ENCODE measurements at regions of chr5 and their contacts with region 1.

Region 1: GRCh38 chr5:127011961-127012644 is 18.3 kb downstream of the MARCHF3 start:
- DNase-seq: peak; percentile 66
- ATAC-seq: peak; percentile 85
- H3K4me3 ChIP-seq: no peak overlapping the region
- H3K27ac ChIP-seq: peak overlapping the region; percentile 65
- H3K4me1 ChIP-seq: peaks cover 25% of the 10 kb centered on the region
- H3K27me3 ChIP-seq: no peaks in the 10 kb centered on the region
- CTCF ChIP-seq: no peak
- EP300 ChIP-seq: peak; percentile 73 to 87; a peak in 2 of 4 replicates
- POLR2A ChIP-seq: 0 out of 2 replicates have a peak, but pooled peaks have one; percentile 20
- RAD21 ChIP-seq: no peak

Region 2: GRCh38 chr5:126443374-126443851 is 568.7 kb before region 1 on chr5:
- CTCF ChIA-PET with region 1: no interaction called
- POLR2A ChIA-PET with region 1: no interaction called
- RAD21 ChIA-PET with region 1: no interaction called
- SMC1A ChIA-PET with region 1: no interaction called
- in situ Hi-C with region 1: no loop called
- intact Hi-C with region 1: loop called (anchors 5 kb)
- DNase-seq: peak; percentile 75
- ATAC-seq: peak; percentile 85
- H3K4me3 ChIP-seq: no peak overlapping the region; the same call in 1 of the 2 replicates
- H3K27ac ChIP-seq: peak overlapping the region; percentile 56; the same call in 1 of the 2 replicates
- H3K4me1 ChIP-seq: peaks cover 36% of the 10 kb centered on the region
- H3K27me3 ChIP-seq: no peaks in the 10 kb centered on the region
- CTCF ChIP-seq: no peak
- EP300 ChIP-seq: peak; percentile 79 to 86; a peak in 3 of 4 replicates
- POLR2A ChIP-seq: no peak
- RAD21 ChIP-seq: 0 out of 2 replicates have a peak, but pooled peaks have one; percentile 3

Region 3: GRCh38 chr5:126965061-126965475 is 47.0 kb before region 1 on chr5:
- CTCF ChIA-PET with region 1: interaction called, 4 read pairs
- POLR2A ChIA-PET with region 1: interaction called, 14 read pairs
- RAD21 ChIA-PET with region 1: interaction called, 102 read pairs
- SMC1A ChIA-PET with region 1: interaction called, 102 read pairs
- in situ Hi-C with region 1: no loop called
- intact Hi-C with region 1: loop called (anchors 2 kb)
- DNase-seq: peak; percentile 55
- ATAC-seq: peak; percentile 75
- H3K4me3 ChIP-seq: no peak overlapping the region
- H3K27ac ChIP-seq: no peak overlapping the region
- H3K4me1 ChIP-seq: peaks cover 14% of the 10 kb centered on the region
- H3K27me3 ChIP-seq: no peaks in the 10 kb centered on the region
- CTCF ChIP-seq: no peak
- EP300 ChIP-seq: no peak
- POLR2A ChIP-seq: no peak
- RAD21 ChIP-seq: no peak

Region 4: GRCh38 chr5:126988021-126988569 is 24.0 kb before region 1 on chr5:
- CTCF ChIA-PET with region 1: interaction called, 4 read pairs
- POLR2A ChIA-PET with region 1: interaction called, 5 read pairs
- RAD21 ChIA-PET with region 1: interaction called, 7 read pairs
- SMC1A ChIA-PET with region 1: interaction called, 21 read pairs
- in situ Hi-C with region 1: no loop called
- intact Hi-C with region 1: loop called (anchors 1 kb)
- DNase-seq: peak; percentile 79
- ATAC-seq: peak; percentile 93
- H3K4me3 ChIP-seq: peak overlapping the region; percentile 8; the same call in 1 of the 2 replicates
- H3K27ac ChIP-seq: peak overlapping the region; percentile 63
- H3K4me1 ChIP-seq: peaks cover 16% of the 10 kb centered on the region
- H3K27me3 ChIP-seq: no peaks in the 10 kb centered on the region
- CTCF ChIP-seq: no peak
- EP300 ChIP-seq: peak; percentile 57 to 78; a peak in 2 of 4 replicates
- POLR2A ChIP-seq: no peak
- RAD21 ChIP-seq: 0 out of 2 replicates have a peak, but pooled peaks have one; percentile 0

Region 5: GRCh38 chr5:127072861-127073846 is 61.1 kb after region 1 on chr5 and contains the start of gene C5orf63:
- CTCF ChIA-PET with region 1: no interaction called
- POLR2A ChIA-PET with region 1: no interaction called
- RAD21 ChIA-PET with region 1: interaction called, 13 read pairs
- SMC1A ChIA-PET with region 1: no interaction called
- in situ Hi-C with region 1: no loop called
- intact Hi-C with region 1: no loop called
- DNase-seq: peak; percentile 17
- ATAC-seq: peak; percentile 97
- H3K4me3 ChIP-seq: peak within 1 kb of the TSS; percentile 77
- H3K27ac ChIP-seq: peak within 1 kb of the TSS; percentile 58
- H3K4me1 ChIP-seq: no peaks in the 10 kb centered on the region
- H3K27me3 ChIP-seq: no peaks in the 10 kb centered on the region
- CTCF ChIP-seq: 0 out of 6 replicates have a peak, but pooled peaks of 1 of the 3 experiments have one; percentile 12
- EP300 ChIP-seq: no peak
- POLR2A ChIP-seq: peak; percentile 88
- RAD21 ChIP-seq: no peak
- polyA plus RNA-seq, gene C5orf63: 48.5 to 54.3 TPM